Panc1 (cell line): ENCODE measurements at regions of chr9 and their contacts with region 1.

Region 1: DNA sequence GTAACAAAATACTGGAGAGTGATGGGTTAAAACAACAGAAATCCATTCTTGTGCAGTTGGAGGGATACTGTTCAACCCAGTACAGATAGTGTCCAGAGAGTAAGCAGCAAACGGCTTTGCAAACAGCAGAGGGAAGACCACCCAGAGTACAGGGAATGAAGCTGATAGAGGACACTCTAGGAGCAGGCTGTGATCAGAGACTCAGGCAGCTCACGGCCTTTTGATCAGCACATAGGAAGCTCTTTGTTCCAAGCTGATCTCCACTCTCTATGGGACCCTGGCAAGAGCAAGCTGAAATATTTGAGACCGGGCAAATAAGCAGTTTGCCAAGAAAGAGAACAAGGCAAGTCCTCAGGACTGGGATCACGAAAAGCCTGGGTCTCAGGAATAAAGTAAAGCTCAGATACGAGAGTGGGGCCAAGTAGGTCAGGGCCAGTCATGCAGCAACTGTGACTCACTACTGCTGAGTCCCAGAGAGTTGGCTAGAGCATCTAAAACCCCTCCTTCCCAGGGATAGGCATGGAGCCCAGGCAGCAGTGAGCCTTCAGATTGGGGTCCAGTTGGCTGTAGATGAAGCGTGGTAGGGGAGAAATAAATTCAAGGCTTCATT is 52.4 kb downstream of the MELK start:
- DNase-seq: no peak
- ATAC-seq: peak; percentile 87
- H3K4me3 ChIP-seq: no peak overlapping the region
- H3K27ac ChIP-seq: peak overlapping the region; percentile 9; the same call in 1 of the 2 replicates
- H3K4me1 ChIP-seq: peaks cover 8% of the 10 kb centered on the region
- H3K27me3 ChIP-seq: no peaks in the 10 kb centered on the region
- CTCF ChIP-seq: no peak

Region 2: GRCh38 chr9:36843964-36844363 is 218.9 kb after region 1 on chr9:
- CTCF ChIA-PET with region 1: no interaction called
- POLR2A ChIA-PET with region 1: interaction called, 10 read pairs
- in situ Hi-C with region 1: no loop called
- intact Hi-C with region 1: no loop called
- DNase-seq: no peak
- ATAC-seq: no peak
- H3K4me3 ChIP-seq: no peak overlapping the region
- H3K27ac ChIP-seq: no peak overlapping the region
- H3K4me1 ChIP-seq: no peaks in the 10 kb centered on the region
- H3K27me3 ChIP-seq: peaks cover 6% of the 10 kb centered on the region; the same call in 1 of the 2 replicates
- CTCF ChIP-seq: no peak